ENCODE measurements at regions of chr11 and their contacts with region 1.

Region 1: GRCh38 chr11:31340903-31341572 is 28.5 kb downstream of the DCDC1 start:
- DNase-seq: peak; percentile 43
- H3K4me3 ChIP-seq: no peak overlapping the region
- H3K27ac ChIP-seq: no peak overlapping the region
- H3K4me1 ChIP-seq: no peaks in the 10 kb centered on the region
- H3K27me3 ChIP-seq: peaks cover 3 to 4% of the 10 kb centered on the region in 2 experiments
- CTCF ChIP-seq: peak; percentile 49 to 70
- POLR2A ChIP-seq: no peak

Region 2: DNA sequence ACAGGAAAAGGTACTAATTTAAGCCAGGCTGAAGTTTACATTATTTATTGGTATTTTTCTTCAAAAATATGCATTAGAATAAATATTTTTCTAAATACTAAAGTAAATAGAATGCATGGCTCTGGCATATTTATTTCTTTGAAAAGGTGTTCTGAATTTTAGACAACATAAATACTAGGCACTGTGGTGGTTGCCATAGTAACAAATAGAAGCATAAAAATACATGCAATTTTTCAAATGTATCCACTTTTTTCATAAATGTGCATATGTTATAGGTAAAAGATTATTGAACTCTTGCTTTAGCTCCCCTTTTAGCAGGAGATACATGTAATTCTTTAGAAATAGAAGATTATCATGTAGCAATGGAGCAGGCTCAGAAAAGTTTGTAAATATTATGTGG is 10.1 kb after region 1 on chr11:
- CTCF ChIA-PET with region 1: interaction called, 13 read pairs
- POLR2A ChIA-PET with region 1: no interaction called
- dilution Hi-C with region 1: no loop called
- intact Hi-C with region 1: no loop called
- DNase-seq: no peak
- H3K4me3 ChIP-seq: no peak overlapping the region
- H3K27ac ChIP-seq: no peak overlapping the region
- H3K4me1 ChIP-seq: no peaks in the 10 kb centered on the region
- H3K27me3 ChIP-seq: peaks cover 0 to 7% of the 10 kb centered on the region in 2 experiments
- CTCF ChIP-seq: no peak
- POLR2A ChIP-seq: no peak